Activated naive CD4-positive, alpha-beta T cell treated with anti-CD3 and anti-CD28 coated beads for 36 hours (primary cell): ENCODE measurements at regions of chr14 and their contacts with region 1.

Region 1: GRCh38 chr14:67285876-67286452 is 44.7 kb downstream of the PALS1 start:
- DNase-seq: no peak
- H3K4me3 Mint-ChIP-seq: no peak overlapping the region
- H3K27ac Mint-ChIP-seq: no peak overlapping the region
- H3K4me1 Mint-ChIP-seq: no peaks in the 10 kb centered on the region
- H3K27me3 Mint-ChIP-seq: no peaks in the 10 kb centered on the region

Region 2: DNA sequence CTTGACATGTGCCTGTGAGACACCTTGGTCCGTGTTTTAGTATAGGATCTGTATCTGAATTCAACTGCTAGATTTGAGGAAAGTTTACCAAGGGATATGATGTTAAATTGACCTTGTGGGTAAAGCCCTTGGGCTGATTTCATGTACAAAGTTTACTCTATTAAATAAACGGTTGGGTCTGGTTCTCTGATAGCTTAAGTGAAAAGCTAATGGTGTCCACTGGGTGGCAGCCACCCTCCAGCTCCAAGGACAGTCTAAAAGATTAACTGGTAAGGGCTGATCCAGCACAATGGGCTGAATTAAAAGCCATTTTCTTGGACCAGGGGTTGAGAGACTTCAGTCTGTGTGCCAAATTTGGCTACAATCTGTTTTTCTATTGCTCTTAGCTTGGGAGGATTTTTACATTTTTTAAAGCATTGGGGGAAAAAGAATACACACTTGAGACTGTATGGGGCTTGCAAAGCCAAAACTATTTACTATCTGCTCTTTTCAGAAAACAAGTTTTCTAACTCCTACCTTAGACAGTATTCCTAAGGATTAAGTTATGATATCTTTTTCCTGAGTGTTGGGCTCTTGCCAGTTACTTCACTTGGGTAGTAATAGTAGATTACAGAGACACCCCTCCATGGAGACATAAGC is 661.5 kb before region 1 on chr14:
- CTCF ChIA-PET with region 1: interaction called, 3 read pairs
- intact Hi-C with region 1: loop called (anchors 1 kb)
- DNase-seq: peak; percentile 64
- H3K4me3 Mint-ChIP-seq: no peak overlapping the region
- H3K27ac Mint-ChIP-seq: no peak overlapping the region
- H3K4me1 Mint-ChIP-seq: peaks cover 2% of the 10 kb centered on the region
- H3K27me3 Mint-ChIP-seq: no peaks in the 10 kb centered on the region

Region 3: GRCh38 chr14:67068251-67068650 is 217.7 kb before region 1 on chr14:
- CTCF ChIA-PET with region 1: no interaction called
- intact Hi-C with region 1: no loop called
- DNase-seq: no peak
- H3K4me3 Mint-ChIP-seq: no peak overlapping the region
- H3K27ac Mint-ChIP-seq: no peak overlapping the region
- H3K4me1 Mint-ChIP-seq: peaks cover 12% of the 10 kb centered on the region
- H3K27me3 Mint-ChIP-seq: no peaks in the 10 kb centered on the region

Region 4: GRCh38 chr14:67158566-67158965 is 127.4 kb before region 1 on chr14:
- CTCF ChIA-PET with region 1: interaction called, 21 read pairs
- intact Hi-C with region 1: no loop called
- DNase-seq: no peak
- H3K4me3 Mint-ChIP-seq: no peak overlapping the region
- H3K27ac Mint-ChIP-seq: no peak overlapping the region
- H3K4me1 Mint-ChIP-seq: peaks cover 16% of the 10 kb centered on the region
- H3K27me3 Mint-ChIP-seq: no peaks in the 10 kb centered on the region

Region 5: GRCh38 chr14:67166450-67166853 is 119.5 kb before region 1 on chr14:
- CTCF ChIA-PET with region 1: interaction called, 66 read pairs
- intact Hi-C with region 1: loop called (anchors 1 kb)
- DNase-seq: peak; percentile 71
- H3K4me3 Mint-ChIP-seq: no peak overlapping the region
- H3K27ac Mint-ChIP-seq: no peak overlapping the region
- H3K4me1 Mint-ChIP-seq: no peaks in the 10 kb centered on the region
- H3K27me3 Mint-ChIP-seq: no peaks in the 10 kb centered on the region